IMR-90 (cell line): ENCODE measurements at regions of chr2 and their contacts with region 1.

Region 1: DNA sequence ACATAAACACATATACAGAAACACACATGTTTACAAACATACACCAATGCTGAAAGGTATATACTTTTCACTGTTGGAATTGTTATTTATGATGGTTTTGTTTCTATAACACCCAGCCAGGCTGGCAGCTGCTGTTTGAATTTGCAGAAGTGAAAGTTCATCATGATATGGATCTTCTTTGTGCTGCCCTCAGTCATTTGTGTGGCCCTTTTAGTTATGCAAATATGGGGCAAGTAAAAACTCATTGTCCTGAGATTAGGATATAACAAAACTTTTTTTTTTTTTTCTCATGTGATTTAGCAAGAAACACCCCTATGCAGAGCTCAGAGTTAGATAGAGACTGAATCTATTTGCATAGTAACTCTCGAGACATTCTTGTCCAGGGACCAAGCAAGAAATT is 714.1 kb downstream of the KCNJ3 start:
- DNase-seq: no peak
- ATAC-seq: no peak
- H3K4me3 ChIP-seq: no peak overlapping the region
- H3K27ac ChIP-seq: no peak overlapping the region
- H3K4me1 ChIP-seq: no peaks in the 10 kb centered on the region
- H3K27me3 ChIP-seq: no peaks in the 10 kb centered on the region
- CTCF ChIP-seq: no peak
- POLR2A ChIP-seq: no peak
- RAD21 ChIP-seq: no peak

Region 2: DNA sequence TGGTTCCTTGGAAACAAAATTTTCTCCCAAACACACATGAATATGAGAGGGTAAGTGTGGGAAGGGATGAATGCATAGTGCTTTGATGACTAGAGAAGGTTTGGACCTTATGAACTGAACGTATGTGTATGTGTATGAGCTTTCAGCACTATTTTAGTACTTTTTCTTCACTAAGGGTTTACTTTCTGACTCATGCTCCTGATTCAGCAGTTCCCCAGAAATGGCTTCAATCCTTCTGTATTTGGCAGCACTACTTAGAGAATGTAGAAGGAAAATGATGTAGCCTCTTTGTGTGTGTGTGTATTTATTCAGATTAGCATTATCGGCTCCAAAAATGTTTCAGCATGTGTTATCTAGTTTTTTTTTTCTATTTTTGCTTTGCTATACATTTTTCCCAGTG is 691.9 kb before region 1 on chr2:
- CTCF ChIA-PET with region 1: no interaction called
- POLR2A ChIA-PET with region 1: no interaction called
- dilution Hi-C with region 1: no loop called
- in situ Hi-C with region 1: no loop called
- intact Hi-C with region 1: no loop called
- DNase-seq: no peak
- ATAC-seq: no peak
- H3K4me3 ChIP-seq: no peak overlapping the region
- H3K27ac ChIP-seq: no peak overlapping the region
- H3K4me1 ChIP-seq: no peaks in the 10 kb centered on the region
- H3K27me3 ChIP-seq: no peaks in the 10 kb centered on the region
- CTCF ChIP-seq: no peak
- POLR2A ChIP-seq: no peak
- RAD21 ChIP-seq: no peak

Region 3: GRCh38 chr2:155301221-155301620 is 111.4 kb before region 1 on chr2:
- CTCF ChIA-PET with region 1: interaction called, 11 read pairs
- POLR2A ChIA-PET with region 1: no interaction called
- dilution Hi-C with region 1: no loop called
- in situ Hi-C with region 1: no loop called
- intact Hi-C with region 1: no loop called
- DNase-seq: no peak
- ATAC-seq: no peak
- H3K4me3 ChIP-seq: no peak overlapping the region
- H3K27ac ChIP-seq: no peak overlapping the region
- H3K4me1 ChIP-seq: no peaks in the 10 kb centered on the region
- H3K27me3 ChIP-seq: no peaks in the 10 kb centered on the region
- CTCF ChIP-seq: no peak
- POLR2A ChIP-seq: no peak
- RAD21 ChIP-seq: no peak